Left cardiac atrium (tissue), 4 donors: ENCODE measurements at regions of chr1 and their contacts with region 1.

Region 1: DNA sequence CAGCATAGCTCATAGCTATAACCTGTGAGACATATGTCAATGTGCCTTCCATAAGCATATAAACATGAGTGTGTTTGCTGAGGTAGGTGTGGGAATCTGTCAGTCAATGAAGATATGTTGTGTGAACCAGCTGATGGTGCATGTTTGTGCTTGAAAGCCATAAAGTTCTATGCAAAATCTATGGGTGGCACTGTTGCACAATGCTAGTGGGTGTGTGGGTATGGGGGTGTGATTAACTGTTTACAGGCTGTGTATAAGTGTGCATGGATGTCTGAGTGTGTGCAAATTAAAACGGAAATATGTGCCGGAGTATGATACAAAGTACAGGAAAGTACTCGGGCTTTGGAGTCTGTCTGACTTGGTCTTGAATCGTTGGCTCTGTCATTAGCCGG is 1.0 kb upstream of the ATP2B4 start:
- DNase-seq: no peak
- ATAC-seq: peak; percentile 23 to 42

Region 2: GRCh38 chr1:203584035-203584434 is 41.6 kb before region 1 on chr1:
- intact Hi-C with region 1: no loop called
- DNase-seq: no peak
- ATAC-seq: peak in 1 of 2 donors; percentile 73

Region 3: DNA sequence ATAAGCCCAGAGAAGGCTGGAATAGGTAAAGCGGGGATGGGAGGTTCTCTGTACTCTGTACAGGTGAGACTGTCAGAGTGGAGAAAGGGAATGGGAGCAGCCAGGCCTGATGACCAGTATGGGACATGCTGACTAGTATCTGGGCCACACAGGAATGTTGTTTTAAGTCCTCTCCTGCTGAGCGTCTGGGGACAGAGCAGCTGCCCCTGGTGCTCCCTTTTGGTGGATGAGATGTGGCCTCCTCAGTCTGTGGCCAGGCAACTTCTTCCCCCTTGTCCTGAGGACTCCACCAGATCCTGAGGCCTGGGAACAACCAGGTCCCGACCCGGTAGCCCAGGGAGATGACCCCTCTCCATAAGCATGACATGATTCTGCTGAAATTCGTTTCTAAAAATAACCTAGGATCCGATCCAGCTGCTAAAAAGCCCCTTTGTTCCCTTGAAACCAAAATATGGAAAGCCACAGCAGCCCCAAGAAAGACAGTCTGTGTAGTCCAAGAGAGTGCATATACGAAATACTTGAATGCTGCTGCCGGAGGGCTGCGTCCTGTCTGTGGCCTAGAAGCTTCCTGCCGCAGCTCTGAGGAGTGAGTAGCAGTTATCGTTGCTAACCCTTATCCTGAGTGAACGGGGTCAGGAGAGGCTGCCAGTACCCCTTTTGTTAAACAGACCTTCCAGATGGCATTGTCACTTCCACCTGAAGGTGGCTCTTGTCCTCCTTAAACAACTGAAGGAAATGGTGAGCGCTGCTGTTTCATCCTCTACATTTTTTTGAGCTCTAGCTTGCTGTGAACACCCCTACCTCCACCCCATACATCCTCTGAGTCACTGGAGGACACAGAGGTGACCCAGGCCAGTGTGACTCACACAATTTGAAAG is 48.2 kb after region 1 on chr1:
- intact Hi-C with region 1: loop called in 1 of 2 experiments (anchors 5 kb)
- DNase-seq: peak; percentile 66
- ATAC-seq: peak; percentile 57 to 86

Region 4: GRCh38 chr1:203692565-203693470 is 67.2 kb after region 1 on chr1:
- intact Hi-C with region 1: loop called (anchors 2 to 5 kb)
- DNase-seq: peak; percentile 89
- ATAC-seq: peak; percentile 91 to 93